ENCODE measurements at regions of chr3 and their contacts with region 1.

Region 1: GRCh38 chr3:56801662-56802377 is at the start of gene ARHGEF3:
- DNase-seq: peak; percentile 84
- ATAC-seq: peak; percentile 91
- H3K4me3 Mint-ChIP-seq: peak within 1 kb of the TSS; percentile 95
- H3K27ac Mint-ChIP-seq: peak within 1 kb of the TSS; percentile 87
- H3K4me1 Mint-ChIP-seq: peaks cover 49% of the 10 kb centered on the region
- H3K27me3 Mint-ChIP-seq: no peaks in the 10 kb centered on the region
- CTCF ChIP-seq: peak; percentile 32
- total RNA-seq, gene ARHGEF3: 22.1 and 27.0 TPM in 2 replicates

Region 2: DNA sequence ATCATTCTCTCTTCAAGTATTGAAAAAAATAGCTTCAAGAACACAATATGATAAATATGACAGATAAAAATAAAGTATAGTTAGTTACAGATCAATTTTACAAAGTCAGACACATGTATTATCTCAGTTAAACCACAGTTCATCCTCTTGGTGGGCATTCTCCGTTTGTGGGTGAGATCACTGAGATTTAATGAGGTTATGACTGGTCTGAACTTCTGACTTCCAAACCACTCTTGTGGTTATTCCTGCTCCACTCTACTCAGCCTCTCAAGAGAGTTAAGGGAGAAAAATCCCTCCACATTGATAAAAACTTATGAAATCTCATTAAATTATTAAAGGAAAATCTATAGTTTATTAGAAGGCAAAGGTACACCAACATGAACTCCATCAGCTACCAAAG is 1644.1 kb before region 1 on chr3:
- CTCF ChIA-PET with region 1: no interaction called
- POLR2A ChIA-PET with region 1: no interaction called
- intact Hi-C with region 1: no loop called
- DNase-seq: no peak
- ATAC-seq: no peak
- H3K4me3 Mint-ChIP-seq: no peak overlapping the region
- H3K27ac Mint-ChIP-seq: no peak overlapping the region
- H3K4me1 Mint-ChIP-seq: no peaks in the 10 kb centered on the region
- H3K27me3 Mint-ChIP-seq: no peaks in the 10 kb centered on the region
- CTCF ChIP-seq: no peak

Region 3: DNA sequence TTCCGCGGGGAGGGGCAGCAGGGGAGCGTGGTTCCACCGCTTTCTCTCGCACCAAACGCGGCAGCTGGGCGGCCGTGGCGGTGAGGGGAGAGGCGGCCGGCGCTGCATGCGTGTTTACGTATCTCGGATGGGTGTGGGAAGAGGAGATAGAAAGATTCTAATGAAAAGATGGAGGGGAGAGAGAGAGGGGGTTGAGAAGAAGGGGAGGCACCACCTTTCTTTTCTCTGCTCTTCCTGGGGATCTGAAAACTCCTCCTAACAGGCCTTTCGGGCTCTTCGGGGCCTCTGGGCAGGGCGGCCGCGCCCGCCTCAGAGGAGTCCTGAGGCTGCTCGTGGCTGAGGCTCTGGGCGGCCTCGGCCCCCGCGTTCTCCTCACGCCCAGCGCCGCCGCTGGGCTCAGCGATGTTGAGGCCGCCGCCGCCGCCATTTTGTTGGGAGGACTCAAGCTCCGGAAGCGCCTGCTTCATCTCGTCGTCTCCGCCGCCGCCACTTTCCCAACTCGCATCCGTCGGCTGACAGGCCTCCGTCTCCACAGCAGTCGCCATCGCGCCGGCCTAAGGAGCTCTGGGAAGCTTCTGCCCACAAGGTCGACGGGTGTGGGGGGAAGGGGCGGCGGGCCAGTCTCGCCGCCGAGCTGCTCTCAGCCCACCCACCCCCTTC is 119.2 kb before region 1 on chr3:
- CTCF ChIA-PET with region 1: interaction called, 3 read pairs
- POLR2A ChIA-PET with region 1: interaction called, 31 read pairs
- intact Hi-C with region 1: loop called (anchors 1 kb)
- DNase-seq: peak; percentile 76
- ATAC-seq: peak; percentile 73
- H3K4me3 Mint-ChIP-seq: peak overlapping the region; percentile 97
- H3K27ac Mint-ChIP-seq: peak overlapping the region; percentile 97
- H3K4me1 Mint-ChIP-seq: peaks cover 49% of the 10 kb centered on the region
- H3K27me3 Mint-ChIP-seq: no peaks in the 10 kb centered on the region
- CTCF ChIP-seq: no peak

Region 4: DNA sequence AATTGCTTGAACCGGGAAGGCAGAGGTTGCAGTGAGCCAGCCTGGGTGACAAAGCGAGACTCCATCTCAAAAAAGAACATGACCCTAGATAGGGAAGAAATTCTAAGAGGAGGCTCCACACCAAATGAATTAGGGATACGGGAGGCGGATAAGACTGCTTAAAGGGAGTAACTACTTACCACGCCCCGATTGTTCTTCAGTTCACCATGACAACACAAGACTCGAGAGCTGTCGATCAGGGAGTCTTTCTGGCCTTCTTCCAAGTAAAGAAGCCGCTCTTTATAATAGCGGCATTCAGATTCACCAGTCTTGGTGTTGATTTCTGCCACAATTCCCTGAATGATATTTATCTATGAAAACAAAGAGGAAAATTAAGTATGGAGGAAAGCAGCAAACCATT is 64.8 kb before region 1 on chr3:
- CTCF ChIA-PET with region 1: interaction called, 39 read pairs
- POLR2A ChIA-PET with region 1: interaction called, 3 read pairs
- intact Hi-C with region 1: no loop called
- DNase-seq: no peak
- ATAC-seq: no peak
- H3K4me3 Mint-ChIP-seq: no peak overlapping the region
- H3K27ac Mint-ChIP-seq: no peak overlapping the region
- H3K4me1 Mint-ChIP-seq: no peaks in the 10 kb centered on the region
- H3K27me3 Mint-ChIP-seq: no peaks in the 10 kb centered on the region
- CTCF ChIP-seq: no peak

Region 5: GRCh38 chr3:56758539-56758981 is 43.3 kb before region 1 on chr3:
- CTCF ChIA-PET with region 1: interaction called, 104 read pairs
- POLR2A ChIA-PET with region 1: interaction called, 181 read pairs
- intact Hi-C with region 1: loop called (anchors 1 kb)
- DNase-seq: no peak
- ATAC-seq: peak; percentile 71
- H3K4me3 Mint-ChIP-seq: peak overlapping the region; percentile 69
- H3K27ac Mint-ChIP-seq: peak overlapping the region; percentile 95
- H3K4me1 Mint-ChIP-seq: peaks cover 62% of the 10 kb centered on the region
- H3K27me3 Mint-ChIP-seq: no peaks in the 10 kb centered on the region
- CTCF ChIP-seq: no peak

Region 6: GRCh38 chr3:56783644-56784447 is 18.0 kb before region 1 on chr3:
- CTCF ChIA-PET with region 1: interaction called, 91 read pairs
- POLR2A ChIA-PET with region 1: interaction called, 57 read pairs
- intact Hi-C with region 1: loop called (anchors 1 kb)
- DNase-seq: peak; percentile 40
- ATAC-seq: peak; percentile 99
- H3K4me3 Mint-ChIP-seq: peak overlapping the region; percentile 32
- H3K27ac Mint-ChIP-seq: peak overlapping the region; percentile 92
- H3K4me1 Mint-ChIP-seq: peaks cover 88% of the 10 kb centered on the region
- H3K27me3 Mint-ChIP-seq: no peaks in the 10 kb centered on the region
- CTCF ChIP-seq: no peak

Region 7: GRCh38 chr3:57068437-57069089 is 266.7 kb after region 1 on chr3:
- CTCF ChIA-PET with region 1: no interaction called
- POLR2A ChIA-PET with region 1: interaction called, 11 read pairs
- intact Hi-C with region 1: loop called (anchors 5 kb)
- DNase-seq: peak; percentile 52
- ATAC-seq: peak; percentile 97
- H3K4me3 Mint-ChIP-seq: peak overlapping the region; percentile 62
- H3K27ac Mint-ChIP-seq: peak overlapping the region; percentile 88
- H3K4me1 Mint-ChIP-seq: peaks cover 27% of the 10 kb centered on the region
- H3K27me3 Mint-ChIP-seq: peaks cover 22% of the 10 kb centered on the region
- CTCF ChIP-seq: no peak